Endothelial cell of umbilical vein (primary cell): ENCODE measurements at regions of chrX and their contacts with region 1.

Region 1: GRCh38 chrX:18390941-18391538 is 34.4 kb upstream of the CDKL5 start:
- DNase-seq: peak; percentile 49
- H3K4me3 ChIP-seq: no peak overlapping the region
- H3K27ac ChIP-seq: no peak overlapping the region
- H3K4me1 ChIP-seq: no peaks in the 10 kb centered on the region
- H3K27me3 ChIP-seq: no peaks in the 10 kb centered on the region
- CTCF ChIP-seq: peak; percentile 26 to 33
- POLR2A ChIP-seq: no peak

Region 2: GRCh38 chrX:18899796-18900447 is 508.9 kb after region 1 on chrX:
- CTCF ChIA-PET with region 1: no interaction called
- POLR2A ChIA-PET with region 1: no interaction called
- dilution Hi-C with region 1: no loop called
- intact Hi-C with region 1: loop called (anchors 2 kb)
- DNase-seq: peak; percentile 3
- H3K4me3 ChIP-seq: no peak overlapping the region
- H3K27ac ChIP-seq: no peak overlapping the region
- H3K4me1 ChIP-seq: no peaks in the 10 kb centered on the region
- H3K27me3 ChIP-seq: no peaks in the 10 kb centered on the region
- CTCF ChIP-seq: peak; percentile 4 to 17
- POLR2A ChIP-seq: no peak

Region 3: GRCh38 chrX:18931972-18932371 is 540.9 kb after region 1 on chrX:
- CTCF ChIA-PET with region 1: no interaction called
- POLR2A ChIA-PET with region 1: no interaction called
- dilution Hi-C with region 1: no loop called
- intact Hi-C with region 1: loop called (anchors 1 kb)
- DNase-seq: peak; percentile 16
- H3K4me3 ChIP-seq: no peak overlapping the region
- H3K27ac ChIP-seq: no peak overlapping the region
- H3K4me1 ChIP-seq: no peaks in the 10 kb centered on the region
- H3K27me3 ChIP-seq: no peaks in the 10 kb centered on the region
- CTCF ChIP-seq: peak; percentile 23 to 35
- POLR2A ChIP-seq: no peak